Activated B cell treated with CpG ODN at 0.5 μM for 24 hours (primary cell): ENCODE measurements at regions of chr11 and their contacts with region 1.

Region 1: DNA sequence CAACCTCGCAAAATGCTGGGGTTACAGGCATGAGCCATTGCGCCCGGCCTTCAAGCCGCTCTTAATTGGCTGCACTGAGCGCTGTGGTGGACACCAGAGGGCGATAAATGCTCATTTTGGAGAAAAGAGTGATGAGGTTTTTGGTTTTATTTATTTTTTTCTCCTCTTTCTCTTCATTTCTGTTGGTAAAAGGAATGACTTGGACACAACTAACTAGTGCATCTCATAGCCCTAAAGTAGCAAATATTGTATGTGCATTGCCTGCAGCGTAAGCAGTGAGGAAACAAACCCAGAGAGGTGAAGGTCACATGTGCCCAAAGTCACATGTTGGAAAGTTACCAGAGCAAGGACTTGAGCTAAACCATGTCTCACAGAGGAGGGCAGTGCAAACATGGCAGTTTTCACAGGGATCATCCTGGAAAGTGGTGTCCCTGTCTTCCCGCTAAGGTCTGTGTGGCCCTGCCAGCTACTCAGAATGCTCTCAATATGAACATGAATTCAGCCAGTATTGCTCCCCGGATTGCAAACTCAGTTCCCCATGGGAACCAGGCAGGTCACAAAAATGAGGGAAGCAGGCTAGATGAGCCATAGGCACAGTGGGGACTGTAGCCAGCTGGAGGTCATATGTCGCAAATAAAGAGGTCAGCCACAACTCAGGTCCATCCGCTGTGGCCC is 8.6 kb upstream of the CD82 start:
- DNase-seq: no peak
- ATAC-seq: peak; percentile 51
- H3K4me3 Mint-ChIP-seq: peak overlapping the region; percentile 49
- H3K27ac Mint-ChIP-seq: peak overlapping the region; percentile 90
- H3K4me1 Mint-ChIP-seq: peaks cover 64% of the 10 kb centered on the region
- H3K27me3 Mint-ChIP-seq: no peaks in the 10 kb centered on the region
- CTCF ChIP-seq: peak; percentile 21

Region 2: GRCh38 chr11:44539971-44540370 is 16.9 kb before region 1 on chr11:
- CTCF ChIA-PET with region 1: no interaction called
- POLR2A ChIA-PET with region 1: no interaction called
- intact Hi-C with region 1: no loop called
- DNase-seq: no peak
- ATAC-seq: no peak
- H3K4me3 Mint-ChIP-seq: no peak overlapping the region
- H3K27ac Mint-ChIP-seq: no peak overlapping the region
- H3K4me1 Mint-ChIP-seq: peaks cover 3% of the 10 kb centered on the region
- H3K27me3 Mint-ChIP-seq: peaks cover 12% of the 10 kb centered on the region
- CTCF ChIP-seq: no peak

Region 3: DNA sequence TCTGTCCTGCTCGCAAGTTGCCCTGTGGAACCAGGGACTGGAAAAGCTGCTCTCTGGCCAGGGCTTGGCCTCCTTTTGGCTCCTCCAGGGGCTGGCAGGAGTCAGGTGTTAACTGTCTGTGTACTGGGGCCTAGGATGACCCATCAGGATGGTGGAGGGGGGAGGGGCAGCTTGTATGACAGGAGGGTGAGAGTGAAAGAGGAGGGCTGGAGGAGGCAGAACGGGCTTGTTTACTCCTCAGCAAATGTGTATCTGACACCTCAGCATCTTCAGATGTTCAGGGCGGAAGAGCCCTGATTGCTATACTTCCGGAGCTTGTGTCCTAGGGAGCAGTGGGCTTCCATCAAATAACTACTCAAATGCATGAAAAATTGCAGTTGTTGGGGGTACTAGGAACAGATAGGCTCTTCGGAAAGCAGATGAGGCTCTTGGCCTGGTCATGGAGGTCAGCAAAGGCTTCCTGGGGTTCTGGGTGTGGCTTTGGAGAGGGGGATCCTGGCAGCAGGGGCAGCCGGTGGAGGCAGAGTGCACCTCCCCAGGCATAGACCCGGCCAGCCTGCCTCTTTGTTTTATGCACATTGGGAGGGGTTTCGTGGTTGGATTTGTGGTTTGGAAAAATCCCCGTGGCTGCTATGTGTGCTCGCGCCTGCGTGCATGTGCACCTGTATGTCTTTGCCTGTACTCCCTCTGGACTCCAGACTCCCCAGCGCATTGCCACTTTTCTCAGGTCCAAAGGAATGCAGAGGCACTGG is 39.8 kb after region 1 on chr11:
- CTCF ChIA-PET with region 1: interaction called, 16 read pairs
- POLR2A ChIA-PET with region 1: interaction called, 485 read pairs
- intact Hi-C with region 1: loop called (anchors 1 kb)
- DNase-seq: peak; percentile 69
- ATAC-seq: peak; percentile 30
- H3K4me3 Mint-ChIP-seq: peak overlapping the region; percentile 82
- H3K27ac Mint-ChIP-seq: peak overlapping the region; percentile 94
- H3K4me1 Mint-ChIP-seq: peaks cover 95% of the 10 kb centered on the region
- H3K27me3 Mint-ChIP-seq: no peaks in the 10 kb centered on the region
- CTCF ChIP-seq: no peak

Region 4: GRCh38 chr11:44634401-44635281 is 77.8 kb after region 1 on chr11:
- CTCF ChIA-PET with region 1: interaction called, 27 read pairs
- POLR2A ChIA-PET with region 1: no interaction called
- intact Hi-C with region 1: no loop called
- DNase-seq: no peak
- ATAC-seq: peak; percentile 60
- H3K4me3 Mint-ChIP-seq: no peak overlapping the region
- H3K27ac Mint-ChIP-seq: no peak overlapping the region
- H3K4me1 Mint-ChIP-seq: peaks cover 7% of the 10 kb centered on the region
- H3K27me3 Mint-ChIP-seq: peaks cover 23% of the 10 kb centered on the region
- CTCF ChIP-seq: no peak

Region 5: GRCh38 chr11:44775366-44775984 is 218.6 kb after region 1 on chr11:
- CTCF ChIA-PET with region 1: interaction called, 14 read pairs
- POLR2A ChIA-PET with region 1: interaction called, 4 read pairs
- intact Hi-C with region 1: loop called (anchors 1 kb)
- DNase-seq: peak; percentile 37
- ATAC-seq: peak; percentile 64
- H3K4me3 Mint-ChIP-seq: no peak overlapping the region
- H3K27ac Mint-ChIP-seq: peak overlapping the region; percentile 4
- H3K4me1 Mint-ChIP-seq: peaks cover 3% of the 10 kb centered on the region
- H3K27me3 Mint-ChIP-seq: no peaks in the 10 kb centered on the region
- CTCF ChIP-seq: peak; percentile 51